SK-N-SH (cell line): ENCODE measurements at regions of chr7 and their contacts with region 1.

Region 1: GRCh38 chr7:26061688-26062150 is 90.3 kb upstream of the NFE2L3 start:
- DNase-seq: peak; percentile 72
- H3K4me3 ChIP-seq: peak overlapping the region in 1 of 2 experiments; percentile 33; a peak in 1 of 4 replicates
- H3K27ac ChIP-seq: no peak overlapping the region
- H3K4me1 ChIP-seq: peaks cover 0 to 5% of the 10 kb centered on the region in 2 experiments; a peak in 1 of 4 replicates
- H3K27me3 ChIP-seq: peaks cover 23% of the 10 kb centered on the region; the same call in 1 of the 2 replicates
- CTCF ChIP-seq: peak; percentile 94
- EP300 ChIP-seq: no peak
- RAD21 ChIP-seq: peak; percentile 70

Region 2: DNA sequence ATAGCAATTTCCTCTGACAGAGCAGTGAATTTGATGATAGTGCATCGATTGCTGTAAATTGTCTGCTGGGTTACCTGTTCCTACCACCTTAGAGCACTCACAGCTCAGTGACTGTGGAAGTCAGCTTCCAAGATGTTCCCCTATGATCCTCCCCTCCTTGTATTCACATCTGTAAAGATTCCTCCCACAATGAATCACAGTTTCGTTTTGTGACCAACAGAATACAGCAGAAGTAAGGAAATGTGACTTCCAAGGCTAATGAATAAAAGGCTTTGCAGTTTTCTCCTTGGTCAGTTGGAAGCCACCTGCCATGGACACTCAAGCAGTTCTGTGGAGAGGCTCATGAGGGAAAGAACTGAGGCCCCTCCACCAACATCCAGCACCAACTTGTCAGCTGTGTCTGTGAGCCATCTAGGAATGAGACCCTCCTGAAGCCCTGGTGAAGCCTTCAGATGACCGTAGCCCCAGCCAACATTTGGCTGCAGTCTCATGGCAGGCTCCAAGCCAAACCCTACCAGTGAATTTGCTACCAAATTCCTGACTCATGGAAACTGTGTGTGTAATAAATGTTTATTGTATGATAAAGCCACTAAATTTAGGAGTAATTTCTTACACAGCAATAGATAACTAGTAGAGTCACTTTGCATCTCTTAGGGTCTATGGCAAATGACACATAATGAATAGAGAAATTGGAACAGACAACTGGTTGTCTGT is 523.9 kb before region 1 on chr7:
- CTCF ChIA-PET with region 1: no interaction called
- POLR2A ChIA-PET with region 1: no interaction called
- DNase-seq: no peak
- H3K4me3 ChIP-seq: no peak overlapping the region
- H3K27ac ChIP-seq: no peak overlapping the region
- H3K4me1 ChIP-seq: no peaks in the 10 kb centered on the region
- H3K27me3 ChIP-seq: no peaks in the 10 kb centered on the region
- CTCF ChIP-seq: no peak
- EP300 ChIP-seq: no peak
- RAD21 ChIP-seq: no peak

Region 3: GRCh38 chr7:26046150-26046549 is 15.6 kb before region 1 on chr7:
- CTCF ChIA-PET with region 1: interaction called, 11 read pairs
- POLR2A ChIA-PET with region 1: no interaction called
- DNase-seq: no peak
- H3K4me3 ChIP-seq: no peak overlapping the region
- H3K27ac ChIP-seq: no peak overlapping the region
- H3K4me1 ChIP-seq: no peaks in the 10 kb centered on the region
- H3K27me3 ChIP-seq: 0 out of 2 replicates have a peak, but pooled peaks cover 5% of the 10 kb centered on the region
- CTCF ChIP-seq: no peak
- EP300 ChIP-seq: no peak
- RAD21 ChIP-seq: no peak

Region 4: GRCh38 chr7:26071622-26072456 is 10.1 kb after region 1 on chr7:
- CTCF ChIA-PET with region 1: interaction called, 15 read pairs
- POLR2A ChIA-PET with region 1: no interaction called
- DNase-seq: no peak
- H3K4me3 ChIP-seq: no peak overlapping the region
- H3K27ac ChIP-seq: no peak overlapping the region
- H3K4me1 ChIP-seq: peaks cover 0 to 8% of the 10 kb centered on the region in 2 experiments; a peak in 1 of 4 replicates
- H3K27me3 ChIP-seq: peaks cover 21% of the 10 kb centered on the region; the same call in 1 of the 2 replicates
- CTCF ChIP-seq: no peak
- EP300 ChIP-seq: no peak
- RAD21 ChIP-seq: no peak